ENCODE measurements at regions of chr20 and their contacts with region 1.

Region 1: GRCh38 chr20:46349035-46349741 is 40.9 kb upstream of the CDH22 start:
- DNase-seq: peak; percentile 81
- ATAC-seq: peak; percentile 38
- H3K4me3 Mint-ChIP-seq: peak overlapping the region; percentile 38; the same call in 1 of the 2 replicates
- H3K27ac Mint-ChIP-seq: peak overlapping the region; percentile 41
- H3K4me1 Mint-ChIP-seq: peaks cover 36% of the 10 kb centered on the region
- H3K27me3 Mint-ChIP-seq: peaks cover 7% of the 10 kb centered on the region
- CTCF ChIP-seq: peak; percentile 54

Region 2: GRCh38 chr20:46132705-46133120 is 216.5 kb before region 1 on chr20:
- CTCF ChIA-PET with region 1: interaction called, 118 read pairs
- POLR2A ChIA-PET with region 1: interaction called, 3 read pairs
- DNase-seq: peak; percentile 86
- ATAC-seq: peak; percentile 83
- H3K4me3 Mint-ChIP-seq: no peak overlapping the region
- H3K27ac Mint-ChIP-seq: no peak overlapping the region
- H3K4me1 Mint-ChIP-seq: peaks cover 17% of the 10 kb centered on the region
- H3K27me3 Mint-ChIP-seq: peaks cover 17% of the 10 kb centered on the region
- CTCF ChIP-seq: peak; percentile 78

Region 3: GRCh38 chr20:46273717-46274116 is 75.5 kb before region 1 on chr20:
- CTCF ChIA-PET with region 1: interaction called, 10 read pairs
- POLR2A ChIA-PET with region 1: no interaction called
- DNase-seq: no peak
- ATAC-seq: peak; percentile 76
- H3K4me3 Mint-ChIP-seq: no peak overlapping the region
- H3K27ac Mint-ChIP-seq: no peak overlapping the region
- H3K4me1 Mint-ChIP-seq: peaks cover 19% of the 10 kb centered on the region
- H3K27me3 Mint-ChIP-seq: no peaks in the 10 kb centered on the region; the same call in 1 of the 2 replicates
- CTCF ChIP-seq: no peak

Region 4: GRCh38 chr20:46307139-46307998 is 41.8 kb before region 1 on chr20:
- CTCF ChIA-PET with region 1: interaction called, 99 read pairs
- POLR2A ChIA-PET with region 1: no interaction called
- DNase-seq: peak; percentile 82
- ATAC-seq: peak; percentile 89
- H3K4me3 Mint-ChIP-seq: peak overlapping the region; percentile 52
- H3K27ac Mint-ChIP-seq: no peak overlapping the region
- H3K4me1 Mint-ChIP-seq: peaks cover 11% of the 10 kb centered on the region
- H3K27me3 Mint-ChIP-seq: peaks cover 72% of the 10 kb centered on the region
- CTCF ChIP-seq: peak; percentile 87

Region 5: GRCh38 chr20:46336735-46337134 is 12.5 kb before region 1 on chr20:
- CTCF ChIA-PET with region 1: interaction called, 43 read pairs
- POLR2A ChIA-PET with region 1: no interaction called
- DNase-seq: no peak
- ATAC-seq: no peak
- H3K4me3 Mint-ChIP-seq: no peak overlapping the region
- H3K27ac Mint-ChIP-seq: no peak overlapping the region
- H3K4me1 Mint-ChIP-seq: peaks cover 24% of the 10 kb centered on the region
- H3K27me3 Mint-ChIP-seq: peaks cover 7% of the 10 kb centered on the region
- CTCF ChIP-seq: no peak

Region 6: DNA sequence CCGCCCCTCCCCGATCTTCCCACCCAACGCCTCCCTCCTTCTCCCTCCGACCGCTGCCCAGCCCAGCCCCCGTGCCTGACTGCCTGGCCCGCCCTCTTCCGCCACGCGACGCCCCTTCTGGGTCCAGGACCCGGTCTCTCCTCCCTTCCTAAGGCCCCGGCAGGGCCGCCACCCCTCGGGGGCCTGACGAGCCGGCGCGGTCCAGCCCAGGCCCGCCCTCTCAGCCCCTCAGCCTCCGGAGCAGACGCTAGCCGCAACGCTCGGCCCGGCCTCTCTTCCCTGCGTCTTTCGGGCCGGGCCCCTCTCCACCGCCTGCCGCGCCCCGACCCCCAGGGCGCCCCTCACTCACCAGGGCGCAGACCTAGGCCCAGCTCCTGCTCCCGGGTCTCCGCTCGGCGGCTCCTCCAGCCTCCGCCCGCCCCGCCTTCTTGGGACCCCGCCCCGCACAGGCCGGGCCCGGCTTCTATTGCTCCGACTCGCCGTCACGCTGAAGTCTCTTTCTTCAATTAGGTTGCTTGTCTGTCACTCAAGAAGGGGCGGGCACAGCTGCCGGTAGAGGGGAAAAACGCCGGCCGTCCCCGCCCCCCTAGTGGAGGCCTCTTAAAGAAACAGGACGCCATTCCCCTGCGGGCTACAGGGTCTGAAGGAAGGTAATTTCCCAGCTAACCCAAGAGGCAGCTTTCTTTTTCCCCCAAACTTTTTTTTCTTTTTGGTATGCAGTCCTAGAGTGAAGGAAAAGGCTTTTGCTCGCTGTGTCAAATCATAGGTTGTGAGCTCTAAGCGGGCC is 57.2 kb after region 1 on chr20 and contains the start of gene ELMO2:
- CTCF ChIA-PET with region 1: interaction called, 17 read pairs
- POLR2A ChIA-PET with region 1: interaction called, 3 read pairs
- DNase-seq: peak; percentile 98
- ATAC-seq: peak; percentile 86
- H3K4me3 Mint-ChIP-seq: peak within 1 kb of the TSS; percentile 93
- H3K27ac Mint-ChIP-seq: peak within 1 kb of the TSS; percentile 83
- H3K4me1 Mint-ChIP-seq: peaks cover 33% of the 10 kb centered on the region
- H3K27me3 Mint-ChIP-seq: peaks cover 16% of the 10 kb centered on the region
- CTCF ChIP-seq: no peak
- total RNA-seq, gene ELMO2: 28.4 to 35.5 TPM (median 32.3 TPM) in 3 replicates